Activated CD4-positive, alpha-beta memory T cell treated with anti-CD3 and anti-CD28 coated beads for 36 hours (primary cell): ENCODE measurements at regions of chr22 and their contacts with region 1.

Region 1: DNA sequence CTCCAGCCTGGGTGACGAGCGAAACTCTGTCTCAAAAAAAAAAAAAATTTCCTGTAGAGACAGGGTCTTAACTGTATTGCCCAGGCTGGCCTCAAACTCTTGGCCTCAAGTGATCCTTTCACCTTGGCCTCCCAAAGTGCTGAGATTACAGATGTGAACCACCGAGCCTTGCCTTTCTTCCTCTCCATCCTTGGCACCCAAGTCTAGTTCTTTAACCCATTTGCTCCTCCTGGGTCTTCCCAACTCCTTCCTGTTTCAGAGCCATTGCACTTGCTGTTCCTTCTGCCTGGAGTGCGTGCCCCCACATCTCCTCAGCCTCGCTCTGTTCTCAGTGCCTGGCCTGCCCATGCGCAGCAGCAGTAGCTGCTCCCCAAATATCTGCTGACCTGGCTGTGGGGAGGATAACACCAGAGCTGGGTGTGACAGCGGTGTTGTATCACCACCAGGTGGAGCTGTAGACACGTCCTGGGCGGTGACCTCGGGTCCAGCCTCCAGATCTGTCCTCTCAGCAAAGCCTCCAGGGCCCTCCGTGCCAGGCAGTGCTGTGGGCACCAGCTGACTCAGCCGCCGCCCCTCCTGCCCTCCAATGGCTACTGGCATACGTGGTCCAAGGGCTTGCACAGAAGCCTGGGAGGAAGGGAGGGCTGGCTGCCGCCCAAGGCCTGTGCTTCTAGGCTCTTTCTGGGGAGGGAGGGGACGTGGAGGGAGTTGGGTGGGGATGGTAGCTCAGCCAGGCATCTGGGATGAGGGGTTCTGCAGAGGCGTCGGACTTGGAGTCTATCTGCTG is 22.0 kb downstream of the TEF start:
- DNase-seq: peak; percentile 92
- H3K4me3 Mint-ChIP-seq: no peak overlapping the region
- H3K27ac Mint-ChIP-seq: no peak overlapping the region
- H3K4me1 Mint-ChIP-seq: peaks cover 17% of the 10 kb centered on the region
- H3K27me3 Mint-ChIP-seq: no peaks in the 10 kb centered on the region

Region 2: DNA sequence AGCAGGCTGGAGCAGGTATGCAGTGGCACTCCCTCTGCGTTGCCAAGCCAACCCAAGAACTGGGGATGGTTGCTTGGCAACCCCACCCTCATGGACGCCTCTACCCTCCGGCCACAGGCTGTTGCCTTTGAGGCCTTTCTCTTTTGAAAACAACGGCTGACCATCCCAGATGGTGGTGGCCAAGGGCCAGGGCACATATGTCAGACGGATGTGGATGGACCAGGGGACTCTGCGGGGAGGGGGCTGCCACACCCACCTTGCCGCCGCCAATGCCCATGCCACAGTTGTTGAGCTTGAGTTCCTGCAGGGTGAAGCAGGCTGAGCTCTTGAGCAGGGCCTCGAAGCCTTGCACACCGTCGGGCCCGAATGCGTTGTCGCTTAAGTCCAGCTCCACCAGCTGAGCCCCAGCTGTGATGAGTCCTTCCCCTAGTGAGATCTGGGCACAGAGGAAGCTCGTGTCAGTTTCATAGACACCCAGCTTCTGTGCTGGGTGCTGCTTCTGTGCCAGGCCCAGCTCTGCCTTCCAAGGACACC is 139.2 kb before region 1 on chr22:
- CTCF ChIA-PET with region 1: no interaction called
- POLR2A ChIA-PET with region 1: no interaction called
- intact Hi-C with region 1: no loop called
- DNase-seq: no peak
- H3K4me3 Mint-ChIP-seq: no peak overlapping the region
- H3K27ac Mint-ChIP-seq: no peak overlapping the region
- H3K4me1 Mint-ChIP-seq: peaks cover 6% of the 10 kb centered on the region
- H3K27me3 Mint-ChIP-seq: no peaks in the 10 kb centered on the region

Region 3: GRCh38 chr22:41367039-41367679 is 36.6 kb before region 1 on chr22:
- CTCF ChIA-PET with region 1: no interaction called
- POLR2A ChIA-PET with region 1: no interaction called
- intact Hi-C with region 1: no loop called
- DNase-seq: peak; percentile 32
- H3K4me3 Mint-ChIP-seq: no peak overlapping the region
- H3K27ac Mint-ChIP-seq: no peak overlapping the region
- H3K4me1 Mint-ChIP-seq: peaks cover 4% of the 10 kb centered on the region
- H3K27me3 Mint-ChIP-seq: no peaks in the 10 kb centered on the region

Region 4: DNA sequence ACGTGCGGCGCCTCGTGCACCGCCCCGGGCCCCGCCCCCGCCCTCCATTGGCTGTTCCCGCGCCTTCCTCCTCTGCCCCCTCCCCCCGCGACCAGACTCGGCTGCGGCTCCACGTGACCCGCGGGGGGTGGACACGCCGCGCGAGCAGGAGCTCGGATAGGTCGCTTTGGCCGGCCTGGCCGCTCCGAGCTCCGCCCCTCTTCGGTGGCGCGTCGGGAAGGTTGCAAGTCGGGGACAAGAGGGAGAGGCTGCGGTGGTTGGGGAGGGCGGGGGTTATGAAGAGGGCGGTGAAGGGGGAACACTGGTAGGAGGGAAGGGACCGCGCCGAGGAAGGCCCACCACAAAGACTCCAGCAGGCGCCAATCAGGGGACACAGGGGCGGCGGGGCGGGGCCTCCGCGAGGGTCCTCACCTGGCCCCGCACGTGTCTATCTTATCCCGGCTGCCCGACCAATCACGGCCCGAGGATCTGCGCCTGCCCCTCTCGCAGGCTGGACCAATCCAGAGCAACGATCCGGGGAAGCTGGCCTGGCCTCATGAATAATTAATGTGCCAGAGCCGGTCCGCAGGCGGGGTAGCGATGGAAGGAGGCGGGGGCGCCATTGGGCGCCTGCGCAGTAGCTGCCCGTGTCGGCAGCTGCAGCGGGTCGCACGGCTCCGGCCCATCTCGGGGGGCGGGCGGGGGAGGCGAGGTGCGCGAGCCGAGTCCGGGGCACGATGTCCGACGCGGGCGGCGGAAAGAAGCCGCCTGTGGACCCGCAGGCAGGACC is 22.2 kb before region 1 on chr22 and contains the start of gene TEF:
- CTCF ChIA-PET with region 1: interaction called, 14 read pairs
- POLR2A ChIA-PET with region 1: interaction called, 3 read pairs
- intact Hi-C with region 1: no loop called
- DNase-seq: peak; percentile 98
- H3K4me3 Mint-ChIP-seq: peak within 1 kb of the TSS; percentile 81
- H3K27ac Mint-ChIP-seq: peak within 1 kb of the TSS; percentile 86
- H3K4me1 Mint-ChIP-seq: peaks cover 15% of the 10 kb centered on the region
- H3K27me3 Mint-ChIP-seq: no peaks in the 10 kb centered on the region
- total RNA-seq, gene TEF: 1.4 to 1.6 TPM

Region 5: GRCh38 chr22:41468381-41469217 is 64.9 kb after region 1 on chr22 and contains the starts of genes ACO2 and PHF5A:
- CTCF ChIA-PET with region 1: interaction called, 20 read pairs
- POLR2A ChIA-PET with region 1: interaction called, 8 read pairs
- intact Hi-C with region 1: loop called (anchors 1 kb)
- DNase-seq: peak; percentile 99
- H3K4me3 Mint-ChIP-seq: peak within 1 kb of the TSS; percentile 93
- H3K27ac Mint-ChIP-seq: peak within 1 kb of the TSS; percentile 99
- H3K4me1 Mint-ChIP-seq: peaks cover 51% of the 10 kb centered on the region
- H3K27me3 Mint-ChIP-seq: no peaks in the 10 kb centered on the region
- total RNA-seq, gene ACO2: 103 to 105 TPM
- total RNA-seq, gene PHF5A: 55.4 to 60.0 TPM

Region 6: GRCh38 chr22:41501209-41501608 is 97.5 kb after region 1 on chr22:
- CTCF ChIA-PET with region 1: interaction called, 68 read pairs
- POLR2A ChIA-PET with region 1: no interaction called
- intact Hi-C with region 1: no loop called
- DNase-seq: peak; percentile 33
- H3K4me3 Mint-ChIP-seq: no peak overlapping the region
- H3K27ac Mint-ChIP-seq: no peak overlapping the region
- H3K4me1 Mint-ChIP-seq: no peaks in the 10 kb centered on the region
- H3K27me3 Mint-ChIP-seq: no peaks in the 10 kb centered on the region

Region 7: DNA sequence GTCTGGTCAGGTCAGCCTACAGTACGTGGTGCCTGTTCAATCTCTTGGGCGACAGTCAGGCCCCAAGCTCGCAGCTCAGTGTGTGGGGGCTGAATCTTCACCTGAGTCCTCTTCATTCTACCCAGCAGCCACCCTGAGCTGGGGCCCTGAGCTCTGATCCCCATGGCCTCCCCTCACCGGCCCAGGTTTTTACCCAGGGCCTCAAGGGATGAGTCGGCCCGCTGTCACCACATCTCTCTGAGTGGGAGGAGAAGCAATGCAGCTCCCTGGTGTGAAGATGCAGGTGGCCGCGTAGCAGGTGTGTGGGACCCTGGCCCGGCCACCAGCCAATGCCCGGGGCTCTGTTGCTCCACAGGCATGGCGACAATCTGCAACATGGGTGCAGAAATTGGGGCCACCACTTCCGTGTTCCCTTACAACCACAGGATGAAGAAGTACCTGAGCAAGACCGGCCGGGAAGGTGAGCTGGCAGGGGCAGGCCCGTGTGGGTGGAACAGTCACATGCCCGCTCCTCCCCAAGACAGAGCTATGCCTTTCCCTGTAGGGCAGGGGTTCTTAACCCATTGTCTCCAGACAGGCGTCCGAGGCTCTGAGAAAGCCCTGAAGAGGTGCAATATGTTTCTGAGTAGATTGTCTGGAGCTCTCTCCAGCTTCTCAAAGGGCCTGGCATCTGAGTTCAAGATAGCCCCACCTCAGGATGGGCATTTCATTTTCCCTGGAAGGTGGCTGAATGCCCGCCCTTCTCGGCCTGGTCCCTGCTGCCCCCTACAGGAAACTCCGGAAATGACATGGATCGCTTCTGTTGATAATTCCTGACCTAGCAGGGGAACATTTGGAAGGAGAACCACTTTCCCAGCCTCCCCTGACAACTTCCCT is 113.7 kb after region 1 on chr22:
- CTCF ChIA-PET with region 1: interaction called, 99 read pairs
- POLR2A ChIA-PET with region 1: interaction called, 3 read pairs
- intact Hi-C with region 1: loop called (anchors 2 kb)
- DNase-seq: peak; percentile 54
- H3K4me3 Mint-ChIP-seq: no peak overlapping the region
- H3K27ac Mint-ChIP-seq: peak overlapping the region; percentile 33
- H3K4me1 Mint-ChIP-seq: peaks cover 7% of the 10 kb centered on the region
- H3K27me3 Mint-ChIP-seq: no peaks in the 10 kb centered on the region

Region 8: GRCh38 chr22:41526837-41527799 is 123.4 kb after region 1 on chr22:
- CTCF ChIA-PET with region 1: interaction called, 113 read pairs
- POLR2A ChIA-PET with region 1: interaction called, 4 read pairs
- intact Hi-C with region 1: no loop called
- DNase-seq: peak; percentile 65
- H3K4me3 Mint-ChIP-seq: no peak overlapping the region
- H3K27ac Mint-ChIP-seq: peak overlapping the region; percentile 38
- H3K4me1 Mint-ChIP-seq: peaks cover 14% of the 10 kb centered on the region
- H3K27me3 Mint-ChIP-seq: no peaks in the 10 kb centered on the region